ENCODE measurements at regions of chr11 and their contacts with region 1.

Region 1: GRCh38 chr11:118497831-118498230 is 29.4 kb upstream of the TTC36 start:
- DNase-seq: no peak
- ATAC-seq: no peak
- H3K4me3 ChIP-seq: no peak overlapping the region
- H3K27ac ChIP-seq: no peak overlapping the region
- H3K4me1 ChIP-seq: peaks cover 0 to 15% (median under 1%) of the 10 kb centered on the region in 12 donors
- H3K27me3 ChIP-seq: no peaks in the 10 kb centered on the region
- CTCF ChIP-seq: no peak
- POLR2A ChIP-seq: no peak

Region 2: DNA sequence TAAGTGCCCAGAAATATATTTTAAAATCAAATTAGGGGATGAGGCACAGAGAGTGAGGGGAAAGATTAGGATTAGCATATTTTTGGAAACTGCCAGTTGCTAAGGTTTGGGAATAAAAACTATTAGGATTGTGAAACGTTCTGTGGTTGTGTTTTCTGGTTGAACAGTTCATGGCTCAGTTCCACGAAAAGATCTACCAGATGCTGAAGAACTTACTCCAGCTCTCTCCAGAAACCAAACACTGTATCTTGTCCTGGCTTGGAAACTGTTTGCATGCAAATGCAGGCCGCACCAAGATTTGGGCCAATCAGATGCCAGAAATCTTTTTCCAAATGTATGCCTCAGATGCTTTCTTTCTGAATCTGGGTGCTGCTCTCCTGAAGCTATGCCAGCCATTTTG is 123.1 kb before region 1 on chr11:
- intact Hi-C with region 1: loop called in 1 of 10 experiments (anchors 5 kb)
- DNase-seq: no peak
- ATAC-seq: no peak
- H3K4me3 ChIP-seq: no peak overlapping the region
- H3K27ac ChIP-seq: no peak overlapping the region
- H3K4me1 ChIP-seq: no peaks in the 10 kb centered on the region
- H3K27me3 ChIP-seq: no peaks in the 10 kb centered on the region
- CTCF ChIP-seq: no peak
- POLR2A ChIP-seq: no peak

Region 3: GRCh38 chr11:118380571-118380970 is 117.3 kb before region 1 on chr11:
- intact Hi-C with region 1: loop called in 4 of 10 experiments (anchors 5 to 10 kb)
- DNase-seq: no peak
- ATAC-seq: peak in 2 of 4 donors; percentile 36 to 52
- H3K4me3 ChIP-seq: no peak overlapping the region
- H3K27ac ChIP-seq: peak overlapping the region in 3 of 12 donors; percentile 3 to 10 (median 5)
- H3K4me1 ChIP-seq: peaks cover 0 to 2% (median 0%) of the 10 kb centered on the region in 12 donors
- H3K27me3 ChIP-seq: no peaks in the 10 kb centered on the region
- CTCF ChIP-seq: no peak
- POLR2A ChIP-seq: no peak

Region 4: DNA sequence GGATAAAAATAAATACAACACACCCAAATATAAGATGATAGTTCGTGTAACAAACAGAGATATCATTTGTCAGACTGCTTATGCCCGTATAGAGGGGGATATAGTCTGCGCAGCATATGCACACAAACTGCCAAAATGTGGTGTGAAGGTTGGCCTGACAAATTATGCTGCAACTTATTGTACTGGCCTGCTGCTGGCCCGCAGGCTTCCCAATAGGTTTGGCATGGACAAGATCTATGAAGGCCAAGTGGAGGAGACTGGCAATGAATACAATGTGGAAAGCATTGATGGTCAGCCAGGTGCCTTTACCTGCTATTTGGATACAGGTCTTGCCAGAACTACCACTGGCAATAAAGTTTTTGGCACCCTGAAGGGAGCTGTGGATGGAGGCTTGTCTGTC is 63.0 kb after region 1 on chr11:
- intact Hi-C with region 1: no loop called
- DNase-seq: no peak
- ATAC-seq: no peak
- H3K4me3 ChIP-seq: no peak overlapping the region
- H3K27ac ChIP-seq: no peak overlapping the region
- H3K4me1 ChIP-seq: peaks cover 0 to 14% (median 5%) of the 10 kb centered on the region in 12 donors
- H3K27me3 ChIP-seq: no peaks in the 10 kb centered on the region
- CTCF ChIP-seq: no peak
- POLR2A ChIP-seq: no peak

Measured in heart left ventricle (tissue), 16 donors.